ENCODE measurements at regions of chr10 and their contacts with region 1.

Region 1: DNA sequence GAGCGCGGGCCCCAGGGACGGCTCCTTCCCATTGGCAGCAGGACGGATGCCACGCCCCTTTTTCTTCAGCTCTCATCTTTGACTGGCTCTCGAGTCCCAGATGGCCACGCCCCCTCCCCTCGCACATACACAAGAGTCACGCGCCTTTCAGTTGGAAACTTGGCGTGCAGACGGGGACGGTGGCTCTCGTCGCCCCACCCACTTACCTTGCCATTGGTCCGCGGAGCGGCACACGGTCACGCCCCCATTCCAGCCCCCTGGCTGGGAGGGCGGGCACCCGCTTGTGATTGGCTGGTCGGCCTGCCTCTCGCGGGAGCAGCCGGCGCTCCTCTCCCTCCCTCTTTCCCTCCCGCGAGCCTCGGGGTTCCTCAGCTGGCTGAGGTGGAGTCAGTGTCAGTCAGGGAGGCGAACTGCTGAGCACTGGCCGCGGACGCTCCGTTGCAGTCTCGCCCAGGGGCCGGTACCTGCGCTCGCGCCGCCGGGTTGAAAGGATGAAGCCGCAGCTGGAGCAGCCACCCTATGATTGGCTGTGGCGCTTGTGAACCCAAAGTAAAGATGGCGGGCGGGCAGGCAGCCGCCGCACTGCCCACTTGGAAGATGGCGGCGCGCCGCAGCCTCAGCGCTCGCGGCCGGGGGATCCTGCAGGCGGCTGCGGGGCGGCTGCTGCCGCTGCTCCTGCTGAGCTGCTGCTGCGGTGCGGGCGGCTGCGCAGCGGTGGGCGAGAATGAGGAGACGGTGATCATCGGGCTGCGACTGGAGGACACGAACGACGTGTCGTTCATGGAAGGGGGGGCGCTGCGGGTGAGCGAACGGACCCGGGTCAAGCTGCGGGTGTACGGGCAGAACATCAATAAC is at the start of gene CNNM2:
- DNase-seq: peak; percentile 100
- ATAC-seq: peak; percentile 90
- H3K4me3 ChIP-seq: peak within 1 kb of the TSS; percentile 60 to 95 (median 93)
- H3K4me3 Mint-ChIP-seq: peak within 1 kb of the TSS; percentile 98
- H3K27ac ChIP-seq: peak within 1 kb of the TSS; percentile 92 to 94
- H3K27ac Mint-ChIP-seq: peak within 1 kb of the TSS; percentile 96
- H3K4me1 ChIP-seq: peaks cover 31 to 33% of the 10 kb centered on the region in 2 donors
- H3K4me1 Mint-ChIP-seq: peaks cover 53% of the 10 kb centered on the region
- H3K27me3 ChIP-seq: peaks cover 0 to 12% (median 6%) of the 10 kb centered on the region in 4 experiments
- H3K27me3 Mint-ChIP-seq: peaks cover 12% of the 10 kb centered on the region
- CTCF ChIP-seq: no peak
- total RNA-seq, gene CNNM2: 20.2 and 21.6 TPM in 2 replicates

Region 2: GRCh38 chr10:102713814-102714620 is 204.2 kb before region 1 on chr10 and contains the start of gene ARL3:
- CTCF ChIA-PET with region 1: interaction called, 13 read pairs
- POLR2A ChIA-PET with region 1: no interaction called
- intact Hi-C with region 1: loop called (anchors 1 kb)
- DNase-seq: peak; percentile 96
- ATAC-seq: peak; percentile 87
- H3K4me3 ChIP-seq: peak within 1 kb of the TSS; percentile 67 to 94 (median 70)
- H3K4me3 Mint-ChIP-seq: peak within 1 kb of the TSS; percentile 92
- H3K27ac ChIP-seq: peak within 1 kb of the TSS; percentile 64 to 92
- H3K27ac Mint-ChIP-seq: peak within 1 kb of the TSS; percentile 93
- H3K4me1 ChIP-seq: peaks cover 15 to 21% of the 10 kb centered on the region in 2 donors
- H3K4me1 Mint-ChIP-seq: peaks cover 36% of the 10 kb centered on the region
- H3K27me3 ChIP-seq: no peaks in the 10 kb centered on the region
- H3K27me3 Mint-ChIP-seq: no peaks in the 10 kb centered on the region
- CTCF ChIP-seq: peak; percentile 72
- total RNA-seq, gene ARL3: 5.5 and 6.3 TPM in 2 replicates

Region 3: GRCh38 chr10:102853944-102854694 is 64.1 kb before region 1 on chr10 and contains the start of gene BORCS7:
- CTCF ChIA-PET with region 1: no interaction called
- POLR2A ChIA-PET with region 1: no interaction called
- intact Hi-C with region 1: loop called (anchors 1 kb)
- DNase-seq: peak; percentile 93
- ATAC-seq: peak; percentile 99
- H3K4me3 ChIP-seq: peak within 1 kb of the TSS; percentile 86 to 99 (median 98)
- H3K4me3 Mint-ChIP-seq: peak within 1 kb of the TSS; percentile 83
- H3K27ac ChIP-seq: peak within 1 kb of the TSS; percentile 84 to 91
- H3K27ac Mint-ChIP-seq: peak within 1 kb of the TSS; percentile 97
- H3K4me1 ChIP-seq: peaks cover 0 to 8% of the 10 kb centered on the region in 2 donors
- H3K4me1 Mint-ChIP-seq: peaks cover 12% of the 10 kb centered on the region
- H3K27me3 ChIP-seq: no peaks in the 10 kb centered on the region
- H3K27me3 Mint-ChIP-seq: no peaks in the 10 kb centered on the region
- CTCF ChIP-seq: no peak
- total RNA-seq, gene BORCS7: 20.8 and 21.8 TPM in 2 replicates

Region 4: DNA sequence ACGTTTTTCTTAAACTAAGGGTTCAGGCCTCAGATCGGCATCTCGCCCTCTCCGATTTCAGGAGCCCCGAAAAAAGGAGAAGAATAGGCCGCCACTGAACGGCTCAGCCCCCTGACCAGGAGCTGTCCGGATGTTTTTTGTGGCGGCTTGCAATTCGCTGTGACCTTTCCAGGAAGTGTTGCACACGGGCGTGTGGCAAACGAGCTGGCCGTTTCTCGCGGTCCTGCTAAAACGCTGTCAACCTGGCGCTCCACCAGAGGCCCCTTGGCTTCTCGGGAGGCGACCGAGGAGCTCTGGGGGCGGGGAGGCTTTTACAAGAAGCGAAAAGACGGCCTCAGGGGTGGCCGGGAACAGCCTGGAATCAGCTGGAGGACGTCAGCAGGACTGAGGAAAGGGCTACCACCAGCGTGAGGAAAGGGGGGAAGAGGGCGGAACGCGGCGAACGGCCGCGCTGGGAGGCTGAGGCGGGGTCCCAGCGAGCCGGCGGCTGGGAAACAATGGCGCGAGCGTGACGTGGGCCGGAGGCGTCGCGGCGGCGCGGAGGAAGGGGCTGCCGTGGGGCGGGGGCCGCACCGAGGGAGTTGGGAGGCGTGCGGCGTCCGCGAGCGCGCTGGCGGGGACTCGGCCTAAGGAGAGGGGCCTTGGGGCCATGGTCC is 274.4 kb after region 1 on chr10:
- CTCF ChIA-PET with region 1: interaction called, 3 read pairs
- POLR2A ChIA-PET with region 1: interaction called, 3 read pairs
- intact Hi-C with region 1: loop called (anchors 1 kb)
- DNase-seq: peak; percentile 75
- ATAC-seq: peak; percentile 56
- H3K4me3 ChIP-seq: peak overlapping the region; percentile 70 to 93 (median 92)
- H3K4me3 Mint-ChIP-seq: peak overlapping the region; percentile 99
- H3K27ac ChIP-seq: peak overlapping the region; percentile 86 to 87
- H3K27ac Mint-ChIP-seq: peak overlapping the region; percentile 98
- H3K4me1 ChIP-seq: peaks cover 20 to 29% of the 10 kb centered on the region in 2 donors
- H3K4me1 Mint-ChIP-seq: peaks cover 40% of the 10 kb centered on the region
- H3K27me3 ChIP-seq: no peaks in the 10 kb centered on the region
- H3K27me3 Mint-ChIP-seq: no peaks in the 10 kb centered on the region
- CTCF ChIP-seq: no peak

Region 5: GRCh38 chr10:103333925-103334520 is 415.8 kb after region 1 on chr10:
- CTCF ChIA-PET with region 1: interaction called, 30 read pairs
- POLR2A ChIA-PET with region 1: no interaction called
- intact Hi-C with region 1: loop called (anchors 1 kb)
- DNase-seq: peak; percentile 36
- ATAC-seq: no peak
- H3K4me3 ChIP-seq: no peak overlapping the region
- H3K4me3 Mint-ChIP-seq: no peak overlapping the region
- H3K27ac ChIP-seq: no peak overlapping the region
- H3K27ac Mint-ChIP-seq: no peak overlapping the region
- H3K4me1 ChIP-seq: no peaks in the 10 kb centered on the region
- H3K4me1 Mint-ChIP-seq: no peaks in the 10 kb centered on the region
- H3K27me3 ChIP-seq: no peaks in the 10 kb centered on the region
- H3K27me3 Mint-ChIP-seq: no peaks in the 10 kb centered on the region
- CTCF ChIP-seq: peak; percentile 81

Region 6: GRCh38 chr10:103481974-103482531 is 563.9 kb after region 1 on chr10:
- CTCF ChIA-PET with region 1: interaction called, 6 read pairs
- POLR2A ChIA-PET with region 1: no interaction called
- intact Hi-C with region 1: loop called (anchors 2 kb)
- DNase-seq: peak; percentile 82
- ATAC-seq: peak; percentile 81
- H3K4me3 ChIP-seq: no peak overlapping the region
- H3K4me3 Mint-ChIP-seq: no peak overlapping the region
- H3K27ac ChIP-seq: no peak overlapping the region
- H3K27ac Mint-ChIP-seq: peak overlapping the region; percentile 7
- H3K4me1 ChIP-seq: peaks cover 0 to 13% of the 10 kb centered on the region in 2 donors
- H3K4me1 Mint-ChIP-seq: peaks cover 12% of the 10 kb centered on the region
- H3K27me3 ChIP-seq: no peaks in the 10 kb centered on the region
- H3K27me3 Mint-ChIP-seq: no peaks in the 10 kb centered on the region
- CTCF ChIP-seq: peak; percentile 81

Measured in B cell (primary cell).